ENCODE measurements at regions of chr10 and their contacts with region 1.

Region 1: GRCh38 chr10:72088889-72089575 is 681 bp upstream of the SPOCK2 start:
- DNase-seq: peak; percentile 81
- H3K4me3 Mint-ChIP-seq: peak overlapping the region; percentile 99
- H3K27ac Mint-ChIP-seq: peak overlapping the region; percentile 99
- H3K4me1 Mint-ChIP-seq: peaks cover 63% of the 10 kb centered on the region
- H3K27me3 Mint-ChIP-seq: no peaks in the 10 kb centered on the region

Region 2: DNA sequence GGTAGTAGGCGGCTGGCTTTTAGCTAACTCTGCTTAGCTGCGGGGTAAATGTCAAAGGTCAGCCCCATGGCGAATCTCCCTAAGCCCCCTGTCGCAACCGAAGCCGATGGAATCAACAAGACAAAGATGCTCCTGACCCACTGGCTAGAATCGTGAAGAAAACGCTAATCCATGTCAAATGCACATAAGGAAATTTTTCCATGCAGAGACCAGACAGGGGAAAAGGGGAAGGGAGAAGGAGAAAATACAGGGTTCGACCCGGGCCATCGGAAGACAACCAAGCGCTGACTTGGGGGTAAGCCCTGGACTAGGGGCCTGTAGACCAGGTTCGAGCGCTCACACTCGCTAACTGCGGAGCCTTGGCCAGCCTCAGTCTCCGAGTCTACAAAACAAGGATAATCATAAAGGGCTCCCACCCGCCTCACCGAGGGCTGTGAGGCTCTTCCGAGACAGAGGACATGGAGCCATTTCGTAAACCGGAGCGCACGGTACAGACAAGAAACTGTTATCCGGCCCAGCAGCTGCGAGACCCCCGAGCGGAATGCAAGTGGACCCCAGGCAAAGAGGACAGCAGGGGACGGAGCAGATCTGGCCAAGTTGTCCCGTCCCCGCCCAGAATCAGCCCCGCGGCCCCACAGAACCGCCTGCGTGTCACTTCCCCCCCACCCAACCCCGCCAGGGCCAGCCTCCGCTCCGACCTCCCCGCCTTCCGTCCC is 1919.2 kb before region 1 on chr10:
- CTCF ChIA-PET with region 1: no interaction called
- intact Hi-C with region 1: loop called (anchors 10 kb)
- DNase-seq: no peak
- H3K4me3 Mint-ChIP-seq: peak overlapping the region; percentile 87
- H3K27ac Mint-ChIP-seq: peak overlapping the region; percentile 90
- H3K4me1 Mint-ChIP-seq: peaks cover 66% of the 10 kb centered on the region
- H3K27me3 Mint-ChIP-seq: no peaks in the 10 kb centered on the region

Region 3: DNA sequence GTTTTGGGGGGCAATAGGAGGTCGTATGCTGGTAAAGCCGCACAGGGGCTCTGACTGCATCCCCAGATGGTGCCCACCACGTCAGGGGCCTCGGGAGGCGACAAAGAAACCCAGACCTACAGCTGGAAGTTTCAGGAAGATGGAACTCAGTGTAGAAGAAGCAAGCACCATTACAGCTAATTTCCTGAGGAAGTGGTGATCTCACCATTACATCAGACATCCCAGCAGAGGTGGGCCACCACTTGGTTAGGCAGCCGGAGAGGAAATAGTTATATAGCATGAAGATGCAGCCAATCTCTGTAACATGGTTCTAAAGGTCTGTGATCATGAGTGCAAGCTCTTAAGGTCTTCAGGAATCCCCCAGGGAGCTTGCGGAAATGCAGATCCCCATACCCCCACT is 1073.4 kb before region 1 on chr10:
- CTCF ChIA-PET with region 1: no interaction called
- intact Hi-C with region 1: no loop called
- DNase-seq: no peak
- H3K4me3 Mint-ChIP-seq: no peak overlapping the region
- H3K27ac Mint-ChIP-seq: no peak overlapping the region
- H3K4me1 Mint-ChIP-seq: no peaks in the 10 kb centered on the region
- H3K27me3 Mint-ChIP-seq: no peaks in the 10 kb centered on the region

Region 4: DNA sequence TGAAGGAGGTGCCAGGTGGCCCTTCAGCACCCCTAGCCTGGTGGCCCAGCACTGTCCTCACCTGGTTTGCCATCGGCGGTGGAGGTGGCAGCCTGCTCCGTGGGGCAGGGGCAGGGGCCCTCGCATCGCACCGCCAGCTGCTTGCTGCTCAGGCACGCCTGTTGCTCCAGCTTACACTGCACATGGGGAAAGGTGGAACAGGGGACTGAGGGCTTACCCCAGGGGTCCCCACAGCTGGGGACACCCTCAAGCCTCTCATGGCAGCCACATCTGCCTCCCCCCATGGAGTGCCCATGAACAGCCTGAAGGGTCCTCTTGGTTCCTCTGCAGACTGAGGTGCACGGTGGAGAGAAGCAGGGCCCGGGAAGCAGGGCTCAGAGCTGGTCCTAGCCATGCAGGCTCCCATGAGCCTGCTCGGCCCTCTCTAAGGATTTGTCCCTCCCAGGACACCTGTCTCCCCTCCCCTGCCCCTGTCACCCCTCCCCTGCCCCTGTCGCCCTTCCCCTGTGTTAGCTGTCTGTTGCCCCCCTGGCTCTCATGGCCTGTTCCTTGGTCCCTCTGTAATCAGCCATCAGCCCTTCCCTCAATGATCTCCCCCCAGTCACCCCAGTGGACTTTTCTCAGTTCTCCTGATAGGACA is 20.8 kb before region 1 on chr10:
- CTCF ChIA-PET with region 1: interaction called, 11 read pairs
- intact Hi-C with region 1: no loop called
- DNase-seq: no peak
- H3K4me3 Mint-ChIP-seq: no peak overlapping the region
- H3K27ac Mint-ChIP-seq: peak overlapping the region; percentile 53
- H3K4me1 Mint-ChIP-seq: peaks cover 18% of the 10 kb centered on the region
- H3K27me3 Mint-ChIP-seq: no peaks in the 10 kb centered on the region

Region 5: DNA sequence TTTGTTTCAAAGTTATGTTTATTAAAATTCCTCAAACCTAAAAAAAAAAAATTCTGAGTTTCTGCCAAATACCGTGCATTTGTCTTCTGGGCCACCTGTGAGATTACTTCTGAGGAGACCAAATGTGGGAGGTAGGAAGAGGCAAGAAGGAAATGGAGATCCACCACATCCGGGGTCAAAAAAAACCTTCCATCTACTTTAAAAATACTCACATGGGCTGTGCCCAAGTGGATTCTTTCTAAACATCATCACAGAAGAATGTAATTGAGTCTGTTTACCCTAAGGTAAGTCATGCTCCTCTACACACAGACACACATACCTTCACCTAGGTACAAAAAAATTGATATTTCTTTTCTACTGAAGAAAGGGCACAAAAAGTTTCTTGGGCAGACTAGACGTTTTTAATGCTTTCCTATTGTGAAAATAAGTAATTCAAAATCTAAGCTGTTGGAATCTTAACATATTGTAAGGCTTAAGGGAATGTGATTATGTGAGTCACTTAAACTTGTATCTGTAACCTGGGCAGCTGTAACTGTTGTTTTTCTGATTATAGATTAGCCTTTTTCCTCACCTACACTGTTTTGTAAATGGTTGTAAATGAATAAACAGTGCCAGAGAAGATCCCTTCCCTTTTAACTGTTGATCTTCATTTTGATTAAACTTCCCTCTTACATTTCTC is 18.4 kb after region 1 on chr10:
- CTCF ChIA-PET with region 1: interaction called, 8 read pairs
- intact Hi-C with region 1: loop called (anchors 1 kb)
- DNase-seq: peak; percentile 48
- H3K4me3 Mint-ChIP-seq: peak overlapping the region; percentile 71
- H3K27ac Mint-ChIP-seq: peak overlapping the region; percentile 96
- H3K4me1 Mint-ChIP-seq: peaks cover 85% of the 10 kb centered on the region
- H3K27me3 Mint-ChIP-seq: no peaks in the 10 kb centered on the region

Region 6: GRCh38 chr10:72126184-72126871 is 37.3 kb after region 1 on chr10:
- CTCF ChIA-PET with region 1: interaction called, 7 read pairs
- intact Hi-C with region 1: loop called (anchors 5 kb)
- DNase-seq: no peak
- H3K4me3 Mint-ChIP-seq: no peak overlapping the region
- H3K27ac Mint-ChIP-seq: peak overlapping the region; percentile 16
- H3K4me1 Mint-ChIP-seq: peaks cover 46% of the 10 kb centered on the region
- H3K27me3 Mint-ChIP-seq: no peaks in the 10 kb centered on the region

Region 7: DNA sequence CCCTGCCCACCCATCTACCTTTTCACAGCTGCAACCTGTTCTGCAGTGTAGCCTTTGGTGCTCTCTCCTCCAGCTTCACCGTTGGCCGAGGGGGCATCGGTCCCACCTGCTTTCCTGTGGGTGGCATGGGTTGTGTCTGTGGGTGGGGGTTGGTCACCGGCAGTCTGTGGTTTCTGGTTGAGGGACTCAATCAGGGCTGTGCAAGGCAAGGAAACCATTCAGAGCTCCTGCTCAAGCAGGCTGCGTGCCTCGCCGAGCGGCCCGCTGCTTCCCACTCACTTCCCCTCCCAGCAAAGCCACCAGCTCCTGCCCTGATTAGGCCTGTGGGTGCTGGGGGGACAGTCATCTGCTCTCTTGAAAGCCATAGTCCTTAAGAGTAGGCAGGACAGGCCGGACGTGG is 255.9 kb after region 1 on chr10:
- CTCF ChIA-PET with region 1: no interaction called
- intact Hi-C with region 1: no loop called
- DNase-seq: no peak
- H3K4me3 Mint-ChIP-seq: no peak overlapping the region
- H3K27ac Mint-ChIP-seq: no peak overlapping the region
- H3K4me1 Mint-ChIP-seq: peaks cover 14% of the 10 kb centered on the region
- H3K27me3 Mint-ChIP-seq: no peaks in the 10 kb centered on the region